ENCODE measurements at regions of chr2 and their contacts with region 1.

Region 1: DNA sequence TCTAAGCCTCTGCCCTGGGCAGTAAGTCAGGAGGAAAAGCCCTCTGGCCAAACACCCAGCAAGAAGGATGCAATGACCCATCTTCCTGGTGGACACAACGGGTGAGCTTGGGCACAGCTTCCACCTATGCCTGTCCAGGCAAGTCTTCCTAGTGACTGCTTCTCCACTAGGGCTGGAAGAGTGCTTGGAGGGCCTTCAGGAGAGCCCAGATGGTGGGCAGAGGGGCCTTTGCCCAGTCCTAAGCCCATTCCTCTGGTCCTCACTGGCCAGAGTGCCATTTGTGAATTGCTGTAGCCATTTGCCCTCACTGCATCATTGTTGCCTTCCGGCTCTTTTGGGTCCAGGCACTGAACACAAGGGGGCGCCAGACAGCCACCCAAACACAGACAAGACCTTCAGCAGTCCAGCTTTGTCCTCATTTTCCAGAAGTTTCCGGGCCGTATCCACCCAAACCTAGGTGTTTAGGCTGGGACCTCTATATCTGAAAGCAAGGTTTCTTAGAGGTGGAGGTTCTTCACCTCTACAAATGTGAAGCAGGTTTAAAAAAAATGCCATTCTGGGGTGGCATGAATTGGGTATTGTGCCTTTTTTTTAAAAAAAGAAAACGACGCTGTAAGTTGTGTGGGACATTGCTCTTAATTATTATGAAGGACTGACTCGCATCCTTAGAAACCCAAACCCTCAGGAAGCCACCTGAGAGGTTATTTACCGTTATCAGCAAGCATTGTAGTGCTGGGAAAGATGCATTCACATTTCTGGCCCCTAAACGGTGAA is 29.5 kb downstream of the PAX8 start:
- DNase-seq: peak; percentile 85
- CTCF ChIP-seq: peak; percentile 88

Region 2: GRCh38 chr2:113233593-113234550 is 15.3 kb before region 1 on chr2:
- CTCF ChIA-PET with region 1: interaction called, 39 read pairs
- POLR2A ChIA-PET with region 1: no interaction called
- DNase-seq: peak; percentile 43
- CTCF ChIP-seq: peak; percentile 11

Region 3: GRCh38 chr2:113370478-113371091 is 121.4 kb after region 1 on chr2:
- CTCF ChIA-PET with region 1: interaction called, 15 read pairs
- POLR2A ChIA-PET with region 1: no interaction called
- DNase-seq: peak; percentile 49
- CTCF ChIP-seq: peak; percentile 53